Naive thymus-derived CD4-positive, alpha-beta T cell (primary cell): ENCODE measurements at regions of chr5 and their contacts with region 1.

Region 1: GRCh38 chr5:35003018-35003957 is 44.5 kb downstream of the AGXT2 start:
- DNase-seq: peak in 8 of 9 donors; percentile 2 to 71 (median 30)
- ATAC-seq: peak; percentile 51
- H3K4me3 ChIP-seq: no peak overlapping the region
- H3K4me3 Mint-ChIP-seq: no peak overlapping the region
- H3K27ac ChIP-seq: no peak overlapping the region
- H3K27ac Mint-ChIP-seq: no peak overlapping the region
- H3K4me1 ChIP-seq: no peaks in the 10 kb centered on the region
- H3K4me1 Mint-ChIP-seq: no peaks in the 10 kb centered on the region
- H3K27me3 ChIP-seq: no peaks in the 10 kb centered on the region
- H3K27me3 Mint-ChIP-seq: peaks cover 22 to 47% (median 34%) of the 10 kb centered on the region in 5 donors

Region 2: GRCh38 chr5:34486160-34486848 is 517.0 kb before region 1 on chr5:
- CTCF ChIA-PET with region 1: no interaction called
- POLR2A ChIA-PET with region 1: no interaction called
- intact Hi-C with region 1: loop called (anchors 1 kb)
- DNase-seq: peak; percentile 10 to 61 (median 47)
- ATAC-seq: peak; percentile 63
- H3K4me3 ChIP-seq: no peak overlapping the region
- H3K4me3 Mint-ChIP-seq: no peak overlapping the region
- H3K27ac ChIP-seq: no peak overlapping the region
- H3K27ac Mint-ChIP-seq: no peak overlapping the region
- H3K4me1 ChIP-seq: no peaks in the 10 kb centered on the region
- H3K4me1 Mint-ChIP-seq: peaks cover 0 to 6% (median 4%) of the 10 kb centered on the region in 7 donors
- H3K27me3 ChIP-seq: no peaks in the 10 kb centered on the region
- H3K27me3 Mint-ChIP-seq: peaks cover 15 to 37% (median 33%) of the 10 kb centered on the region in 5 donors

Region 3: DNA sequence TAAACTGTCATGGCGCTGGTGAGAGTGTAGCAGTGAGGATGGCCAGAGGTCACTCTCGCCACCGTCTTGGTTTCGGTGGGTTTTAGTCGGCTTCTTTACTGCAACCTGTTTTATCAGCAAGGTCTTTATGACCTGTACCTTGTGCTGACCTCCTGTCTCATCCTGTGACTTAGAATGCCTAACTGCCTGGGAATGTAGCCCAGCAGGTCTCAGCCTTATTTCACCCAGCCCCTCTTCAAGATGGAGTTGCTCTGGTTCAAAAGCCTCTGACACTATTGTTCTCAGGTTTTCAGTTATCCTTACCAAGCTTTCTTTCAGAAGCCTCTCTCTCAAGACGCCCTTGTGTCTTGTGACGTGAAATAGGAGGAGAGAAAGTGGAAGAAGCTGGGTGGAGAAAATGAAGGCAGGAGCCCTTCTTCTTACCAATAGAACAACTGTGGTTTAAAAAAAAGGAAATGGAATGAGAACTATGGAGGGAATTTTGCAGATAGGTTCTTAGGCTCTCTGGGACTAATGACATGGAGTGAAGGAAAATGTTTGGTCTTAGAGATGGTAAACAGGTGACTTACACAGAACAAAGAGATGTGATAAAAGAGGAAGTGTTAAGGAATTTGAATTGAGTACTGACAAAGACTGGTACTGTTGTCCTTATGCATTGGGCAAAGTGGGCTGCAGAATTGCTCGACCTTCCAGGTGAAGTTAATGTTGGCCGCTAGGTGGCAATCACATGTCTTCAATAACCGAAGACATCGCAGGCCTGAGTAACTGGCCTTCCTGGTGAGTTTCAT is 480.5 kb before region 1 on chr5:
- CTCF ChIA-PET with region 1: no interaction called
- POLR2A ChIA-PET with region 1: no interaction called
- intact Hi-C with region 1: loop called (anchors 1 kb)
- DNase-seq: peak in 7 of 9 donors; percentile 11 to 50 (median 38)
- ATAC-seq: peak; percentile 66
- H3K4me3 ChIP-seq: no peak overlapping the region
- H3K4me3 Mint-ChIP-seq: no peak overlapping the region
- H3K27ac ChIP-seq: no peak overlapping the region
- H3K27ac Mint-ChIP-seq: no peak overlapping the region
- H3K4me1 ChIP-seq: no peaks in the 10 kb centered on the region
- H3K4me1 Mint-ChIP-seq: peaks cover 0 to 4% (median 0%) of the 10 kb centered on the region in 7 donors
- H3K27me3 ChIP-seq: no peaks in the 10 kb centered on the region
- H3K27me3 Mint-ChIP-seq: peaks cover 4 to 6% (median 4%) of the 10 kb centered on the region in 5 donors

Region 4: DNA sequence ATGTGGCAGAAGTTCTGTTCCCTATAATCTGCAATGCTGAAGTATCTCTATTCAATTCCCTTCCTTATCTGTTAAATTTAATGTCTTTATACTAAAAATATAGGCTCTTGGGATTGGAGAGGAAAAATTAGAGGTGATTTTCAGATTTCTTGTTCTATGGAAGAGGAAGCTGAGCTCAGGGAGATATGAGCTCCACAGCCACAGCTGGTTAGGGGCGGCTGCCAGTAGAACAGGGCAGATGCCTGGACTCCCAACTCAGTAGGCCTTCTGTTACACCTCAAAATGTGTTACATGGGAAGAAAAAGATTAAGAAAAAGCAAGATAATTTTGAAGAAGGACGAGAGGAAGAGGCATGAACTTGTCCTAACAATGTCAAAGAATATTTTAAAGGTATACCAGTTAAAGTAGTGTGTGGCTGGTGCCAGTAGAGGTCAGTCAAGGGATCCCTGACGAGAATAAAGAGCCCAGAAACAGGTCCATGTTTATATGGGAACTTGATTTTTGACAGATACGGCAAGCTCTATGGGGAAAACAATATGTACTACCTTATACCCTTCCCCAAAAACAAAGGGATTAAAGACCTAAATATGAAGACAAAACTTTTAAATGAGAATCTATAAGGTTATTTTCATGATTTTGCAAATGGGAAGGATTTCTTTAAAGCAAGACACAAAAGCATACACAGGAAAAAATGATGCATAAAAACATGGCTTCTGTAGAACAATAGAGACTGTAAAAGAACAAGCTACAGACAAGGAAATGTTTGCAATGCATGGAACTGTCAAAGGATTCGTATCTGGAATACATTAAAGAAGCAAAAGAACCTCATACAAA is 45.2 kb before region 1 on chr5:
- CTCF ChIA-PET with region 1: no interaction called
- POLR2A ChIA-PET with region 1: interaction called, 3 read pairs
- intact Hi-C with region 1: loop called in 1 of 2 experiments (anchors 1 kb)
- DNase-seq: peak in 3 of 9 donors; percentile 1 to 17 (median 11)
- ATAC-seq: peak; percentile 61
- H3K4me3 ChIP-seq: no peak overlapping the region
- H3K4me3 Mint-ChIP-seq: no peak overlapping the region
- H3K27ac ChIP-seq: no peak overlapping the region
- H3K27ac Mint-ChIP-seq: peak overlapping the region in 7 of 9 donors; percentile 39 to 79 (median 62)
- H3K4me1 ChIP-seq: no peaks in the 10 kb centered on the region
- H3K4me1 Mint-ChIP-seq: peaks cover 0 to 25% (median 0%) of the 10 kb centered on the region in 7 donors
- H3K27me3 ChIP-seq: no peaks in the 10 kb centered on the region
- H3K27me3 Mint-ChIP-seq: no peaks in the 10 kb centered on the region